Astrocyte of the cerebellum (primary cell): ENCODE measurements at regions of chr3 and their contacts with region 1.

Region 1: GRCh38 chr3:100319951-100320350 is 14.6 kb upstream of the NIT2 start:
- DNase-seq: no peak
- H3K4me3 ChIP-seq: no peak overlapping the region
- CTCF ChIP-seq: no peak

Region 2: DNA sequence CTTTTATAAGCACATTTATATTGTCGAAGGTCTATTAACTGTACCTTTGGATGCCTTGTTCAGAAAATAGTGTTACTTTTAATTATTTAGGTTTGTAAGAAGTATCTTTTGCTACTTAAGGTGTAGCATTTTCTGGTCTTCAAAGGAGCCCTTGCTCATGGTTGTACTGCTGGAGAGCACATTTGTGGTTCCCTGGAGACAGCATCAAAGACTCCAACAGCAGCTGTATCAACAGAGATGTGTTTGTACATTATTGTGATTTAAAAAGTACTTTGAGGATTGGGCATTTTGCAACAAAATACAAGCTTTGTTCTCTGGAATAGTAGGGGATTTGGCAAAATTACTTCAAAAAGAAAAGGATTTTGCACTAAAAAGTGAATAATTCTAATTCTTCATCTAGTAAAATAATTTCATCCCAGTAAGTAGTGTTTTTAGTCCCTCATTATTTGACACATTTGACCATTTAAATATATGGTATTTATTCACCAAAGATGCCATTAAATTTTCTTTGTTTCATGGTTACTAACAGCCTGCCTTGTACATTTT is 42.6 kb before region 1 on chr3:
- in situ Hi-C with region 1: no loop called
- DNase-seq: no peak
- H3K4me3 ChIP-seq: no peak overlapping the region
- CTCF ChIP-seq: no peak

Region 3: GRCh38 chr3:100360757-100361496 is 41.0 kb after region 1 on chr3:
- in situ Hi-C with region 1: loop called (anchors 5 kb)
- DNase-seq: no peak
- H3K4me3 ChIP-seq: no peak overlapping the region
- CTCF ChIP-seq: no peak